Gastrocnemius medialis (tissue), 4 donors: ENCODE measurements at regions of chr17 and their contacts with region 1.

Region 1: GRCh38 chr17:43694077-43694870 is 32.6 kb upstream of the MEOX1 start:
- DNase-seq: peak; percentile 43 to 68
- ATAC-seq: peak; percentile 43 to 73
- H3K4me3 ChIP-seq: no peak overlapping the region
- H3K27ac ChIP-seq: no peak overlapping the region
- H3K4me1 ChIP-seq: peaks cover 13 to 26% of the 10 kb centered on the region in 2 donors
- H3K27me3 ChIP-seq: no peaks in the 10 kb centered on the region
- CTCF ChIP-seq: peak; percentile 91 to 94 (median 92)
- POLR2A ChIP-seq: no peak

Region 2: GRCh38 chr17:43760254-43760852 is 66.1 kb after region 1 on chr17:
- in situ Hi-C with region 1: loop called (anchors 5 kb)
- intact Hi-C with region 1: loop called (anchors 1 kb)
- DNase-seq: peak; percentile 85 to 87
- ATAC-seq: peak; percentile 92 to 95
- H3K4me3 ChIP-seq: no peak overlapping the region
- H3K27ac ChIP-seq: no peak overlapping the region
- H3K4me1 ChIP-seq: peaks cover 0 to 2% of the 10 kb centered on the region in 2 donors
- H3K27me3 ChIP-seq: peaks cover 0 to 22% (median 16%) of the 10 kb centered on the region in 3 donors
- CTCF ChIP-seq: peak; percentile 97 to 99 (median 98)
- POLR2A ChIP-seq: no peak

Region 3: GRCh38 chr17:43846221-43846712 is 152.0 kb after region 1 on chr17:
- in situ Hi-C with region 1: loop called in 1 of 4 experiments (anchors 10 kb)
- intact Hi-C with region 1: loop called (anchors 1 kb)
- DNase-seq: peak; percentile 67 to 79
- ATAC-seq: peak; percentile 73 to 86
- H3K4me3 ChIP-seq: peak overlapping the region in 2 of 4 donors; percentile 12 to 47
- H3K27ac ChIP-seq: peak overlapping the region; percentile 5 to 64 (median 48)
- H3K4me1 ChIP-seq: peaks cover 10% of the 10 kb centered on the region in 2 donors
- H3K27me3 ChIP-seq: peaks cover 0 to 3% (median 0%) of the 10 kb centered on the region in 3 donors
- CTCF ChIP-seq: peak; percentile 93 to 99 (median 94)
- POLR2A ChIP-seq: no peak